Heart right ventricle (tissue), 16 donors: ENCODE measurements at regions of chrX and their contacts with region 1.

Region 1: DNA sequence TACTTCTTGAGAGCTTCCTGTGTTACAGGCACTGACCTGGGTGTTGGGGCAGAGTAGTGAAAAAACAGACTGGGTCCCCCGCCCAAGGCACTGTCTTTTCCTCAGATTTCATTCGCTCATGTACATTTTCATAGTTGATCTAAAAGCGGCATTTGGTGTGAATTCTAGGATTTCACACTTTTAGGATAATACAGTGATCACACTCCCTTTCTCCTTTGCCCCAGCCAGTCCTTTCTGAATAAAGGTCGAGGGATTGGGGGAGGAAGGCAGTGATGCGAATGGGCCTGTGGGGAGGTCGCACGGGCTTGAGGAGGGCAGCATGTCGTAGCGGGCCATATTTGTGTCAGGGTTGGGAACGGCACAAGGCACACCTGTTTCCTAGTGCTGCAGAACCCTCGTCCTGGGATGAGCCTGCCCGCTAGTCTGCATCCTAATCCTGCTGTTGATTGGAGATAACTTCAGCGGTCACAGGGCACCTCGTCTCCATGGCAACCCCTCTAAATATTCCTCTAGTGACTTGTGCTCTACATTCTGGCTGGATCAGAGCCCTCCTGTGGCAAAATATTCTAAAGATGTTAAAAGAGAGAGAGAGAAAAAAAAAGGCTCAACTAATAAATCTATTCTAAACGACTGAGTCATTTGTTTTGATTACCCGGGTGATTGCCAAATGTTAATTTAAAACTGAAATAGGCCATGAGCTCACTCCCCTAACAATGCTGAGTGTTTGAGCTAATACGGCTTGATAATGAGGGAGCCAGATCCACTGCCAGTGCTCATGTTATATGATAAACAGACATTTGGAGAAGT is 21.8 kb downstream of the FHL1 start:
- DNase-seq: peak; percentile 28 to 73
- ATAC-seq: peak; percentile 79 to 89 (median 85)
- H3K4me3 ChIP-seq: peak overlapping the region in 5 of 10 donors; percentile 5 to 26 (median 13)
- H3K27ac ChIP-seq: peak overlapping the region; percentile 74 to 89 (median 84)
- H3K4me1 ChIP-seq: peaks cover 0 to 87% (median 28%) of the 10 kb centered on the region in 9 donors
- H3K27me3 ChIP-seq: peaks cover 0 to 24% (median 0%) of the 10 kb centered on the region in 7 donors
- CTCF ChIP-seq: no peak

Region 2: GRCh38 chrX:136065044-136065671 is 104.0 kb before region 1 on chrX:
- intact Hi-C with region 1: no loop called
- DNase-seq: peak; percentile 40 to 65
- ATAC-seq: peak in 7 of 8 donors; percentile 75 to 87 (median 85)
- H3K4me3 ChIP-seq: no peak overlapping the region
- H3K27ac ChIP-seq: peak overlapping the region in 8 of 10 donors; percentile 7 to 72 (median 58)
- H3K4me1 ChIP-seq: peaks cover 0 to 24% (median 9%) of the 10 kb centered on the region in 9 donors
- H3K27me3 ChIP-seq: peaks cover 0 to 5% (median 0%) of the 10 kb centered on the region in 7 donors
- CTCF ChIP-seq: no peak

Region 3: DNA sequence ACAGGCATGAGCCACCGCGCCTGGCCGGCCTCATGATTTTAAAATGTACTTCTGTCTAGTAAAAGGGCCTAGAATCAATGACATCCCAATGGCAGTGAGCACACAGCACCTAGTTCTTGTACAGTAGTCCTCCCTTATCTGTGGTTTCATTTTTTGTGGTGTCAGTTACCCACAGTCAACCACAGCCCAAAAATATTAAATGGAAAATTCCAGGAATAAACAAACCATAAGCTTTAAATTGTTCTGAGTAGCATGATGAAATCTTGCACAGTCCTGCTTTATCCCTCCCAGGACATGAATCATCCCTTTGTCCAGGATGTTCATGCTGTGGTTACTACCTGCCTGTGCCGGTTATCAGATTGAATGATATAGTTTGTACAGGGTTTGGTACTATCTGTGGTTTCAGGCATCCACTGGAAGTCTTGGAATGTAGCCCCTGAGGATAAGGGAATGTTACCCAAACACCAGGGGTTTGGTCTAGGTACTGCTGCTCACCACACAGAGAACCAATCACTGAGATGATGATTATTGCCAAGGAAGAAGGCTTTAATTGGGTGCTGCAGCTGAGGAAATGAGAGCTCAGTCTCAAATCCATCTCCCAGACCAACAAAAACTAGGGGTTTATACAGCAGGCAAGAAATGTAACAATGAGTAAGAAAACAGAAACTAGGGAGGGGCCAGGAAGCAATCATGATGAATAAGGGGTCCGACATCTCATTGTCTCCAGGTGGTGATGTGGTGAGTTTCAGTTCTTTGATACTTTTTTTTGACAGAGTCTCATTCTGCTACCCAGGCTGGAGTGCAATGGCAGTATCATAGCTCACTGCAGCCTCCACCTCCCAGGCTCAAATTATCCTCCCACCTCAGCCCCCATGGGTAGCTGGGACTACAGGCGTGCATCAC is 38.0 kb before region 1 on chrX:
- intact Hi-C with region 1: no loop called
- DNase-seq: no peak
- ATAC-seq: peak in 1 of 8 donors; percentile 58
- H3K4me3 ChIP-seq: no peak overlapping the region
- H3K27ac ChIP-seq: no peak overlapping the region
- H3K4me1 ChIP-seq: peaks cover 0 to 17% (median 5%) of the 10 kb centered on the region in 9 donors
- H3K27me3 ChIP-seq: no peaks in the 10 kb centered on the region
- CTCF ChIP-seq: no peak

Region 4: DNA sequence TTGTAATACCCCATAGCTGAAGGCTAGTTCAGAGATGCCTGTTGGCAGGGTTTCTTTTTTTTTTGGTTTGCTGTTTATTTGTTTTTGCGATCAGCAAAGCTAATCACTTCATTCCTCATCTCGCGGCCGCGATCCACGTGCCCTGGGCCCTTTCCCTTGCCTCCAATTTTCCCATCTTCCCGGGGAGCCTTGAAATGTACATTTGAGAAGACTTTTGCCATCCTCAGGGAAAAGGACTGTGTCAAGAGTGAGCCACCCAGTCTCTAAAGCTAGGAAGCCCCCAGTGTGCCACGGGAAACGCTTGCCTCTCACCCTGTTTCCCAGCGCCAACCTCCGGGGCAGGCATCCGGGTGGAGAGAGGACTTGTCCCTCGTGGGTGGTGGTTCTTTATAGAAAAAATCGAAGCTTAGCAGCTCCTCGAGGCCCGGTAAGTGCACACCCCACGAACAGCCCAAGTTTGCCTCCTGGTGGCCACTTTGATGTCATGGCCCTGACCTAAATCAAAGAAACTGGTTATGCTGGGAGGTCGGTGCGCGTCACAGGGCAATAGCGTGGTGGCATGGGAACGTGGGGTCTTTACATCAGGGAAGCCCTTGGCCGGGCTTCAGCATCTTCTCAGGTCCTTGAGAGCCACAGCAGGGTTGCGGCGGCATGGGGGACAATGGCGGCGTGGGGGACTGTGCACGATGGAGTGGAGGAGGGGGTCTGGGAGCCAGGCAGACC is 40.0 kb after region 1 on chrX:
- intact Hi-C with region 1: loop called in 8 of 10 experiments (anchors 2 to 5 kb)
- DNase-seq: peak; percentile 52 to 55
- ATAC-seq: peak in 7 of 8 donors; percentile 14 to 49 (median 35)
- H3K4me3 ChIP-seq: no peak overlapping the region
- H3K27ac ChIP-seq: peak overlapping the region in 8 of 10 donors; percentile 50 to 72 (median 65)
- H3K4me1 ChIP-seq: peaks cover 5 to 55% (median 30%) of the 10 kb centered on the region in 9 donors
- H3K27me3 ChIP-seq: peaks cover 0 to 15% (median 0%) of the 10 kb centered on the region in 7 donors
- CTCF ChIP-seq: peak; percentile 24 to 67 (median 56)

Region 5: GRCh38 chrX:136214551-136214950 is 45.4 kb after region 1 on chrX:
- intact Hi-C with region 1: loop called in 8 of 10 experiments (anchors 2 to 5 kb)
- DNase-seq: no peak
- ATAC-seq: peak in 1 of 8 donors; percentile 18
- H3K4me3 ChIP-seq: no peak overlapping the region
- H3K27ac ChIP-seq: peak overlapping the region in 1 of 10 donors; percentile 9
- H3K4me1 ChIP-seq: peaks cover 0 to 12% (median 0%) of the 10 kb centered on the region in 9 donors
- H3K27me3 ChIP-seq: peaks cover 0 to 15% (median 0%) of the 10 kb centered on the region in 7 donors
- CTCF ChIP-seq: no peak

Region 6: DNA sequence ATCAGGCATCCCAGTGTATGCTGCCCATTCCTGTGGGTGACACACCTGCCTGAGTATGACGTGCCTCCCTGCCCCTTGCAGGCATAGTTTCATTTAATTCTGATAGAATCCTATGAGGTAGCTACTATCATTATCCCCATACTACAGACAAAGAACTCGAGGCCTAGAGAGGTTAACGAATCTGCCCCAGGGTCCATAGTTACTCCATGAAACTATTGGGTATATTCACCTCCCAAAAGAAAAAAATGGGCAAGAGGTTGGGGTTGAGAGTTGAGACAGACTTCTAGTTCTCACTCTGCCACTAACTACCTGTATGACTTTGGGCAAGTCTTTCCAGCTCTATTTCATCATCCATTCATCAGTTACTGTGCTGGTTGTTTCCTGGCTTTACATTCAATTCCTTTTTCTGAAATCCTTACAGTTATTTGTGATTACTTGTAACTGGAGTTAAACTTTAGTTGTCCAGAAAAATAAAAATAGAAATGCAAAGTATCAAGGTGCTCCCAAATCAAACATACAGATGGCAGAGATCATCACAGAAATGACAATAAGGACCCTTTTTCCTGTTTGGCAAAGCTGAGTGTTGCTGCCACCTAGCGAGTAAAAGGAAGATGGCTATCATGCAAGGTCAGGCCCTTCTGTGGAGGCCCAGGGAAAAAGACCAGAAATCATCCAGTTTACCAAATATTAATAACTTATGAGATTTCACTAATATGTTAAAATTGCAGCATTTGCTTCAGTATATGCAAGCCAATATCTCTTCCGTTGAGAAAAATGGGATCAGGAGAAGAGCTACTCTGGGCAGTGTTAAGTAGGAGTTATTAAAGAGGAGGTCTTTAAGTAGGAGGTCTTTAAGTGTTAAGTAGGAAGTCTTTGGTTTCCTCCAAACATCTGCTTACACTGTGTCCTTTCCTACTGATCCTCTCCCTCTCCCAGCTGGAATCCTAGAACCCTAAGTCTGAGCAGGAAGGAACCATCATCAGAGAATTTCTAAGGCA is 99.2 kb after region 1 on chrX:
- intact Hi-C with region 1: loop called in 6 of 10 experiments (anchors 2 to 10 kb)
- DNase-seq: peak in 1 of 2 donors; percentile 40
- ATAC-seq: peak in 6 of 8 donors; percentile 33 to 65 (median 53)
- H3K4me3 ChIP-seq: no peak overlapping the region
- H3K27ac ChIP-seq: no peak overlapping the region
- H3K4me1 ChIP-seq: no peaks in the 10 kb centered on the region
- H3K27me3 ChIP-seq: peaks cover 0 to 20% (median 0%) of the 10 kb centered on the region in 7 donors
- CTCF ChIP-seq: peak; percentile 47 to 86 (median 68)